SK-N-SH (cell line): ENCODE measurements at regions of chr7 and their contacts with region 1.

Region 1: DNA sequence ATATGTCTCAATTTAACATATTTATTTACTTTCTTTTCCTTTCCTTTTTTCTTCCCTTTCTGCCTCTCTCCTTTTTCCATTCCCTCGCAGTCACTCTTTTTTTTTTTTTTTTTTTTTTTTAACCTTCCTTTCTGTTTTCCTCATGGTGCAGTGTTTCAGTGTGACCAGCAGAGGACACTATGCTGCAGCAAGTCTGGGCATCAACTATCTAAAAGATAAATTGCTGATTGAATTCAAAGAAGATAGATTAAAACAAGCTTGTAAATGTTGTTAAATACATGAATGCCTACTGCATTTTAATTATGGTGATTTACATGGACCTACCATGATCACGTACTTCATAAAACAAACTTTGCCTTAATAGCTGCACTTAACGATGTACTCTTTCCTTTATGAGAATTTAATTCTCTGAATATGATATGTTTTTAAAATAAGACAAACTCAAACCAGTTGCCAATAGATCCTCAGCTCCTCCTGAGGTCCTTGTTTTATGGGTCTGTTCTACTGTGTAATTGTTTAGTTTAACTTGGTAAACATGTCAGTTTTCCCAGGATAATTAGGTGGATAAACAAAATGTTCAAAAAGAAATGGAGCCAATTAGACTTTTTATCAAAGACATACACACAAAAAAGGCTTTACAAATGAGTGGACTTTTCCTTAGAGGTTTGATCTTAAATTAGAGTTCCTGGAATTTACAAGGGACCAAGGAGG is 101.0 kb upstream of the AGR3 start:
- DNase-seq: peak; percentile 30
- H3K4me3 ChIP-seq: no peak overlapping the region; a peak in 1 of 4 replicates
- H3K27ac ChIP-seq: no peak overlapping the region
- H3K4me1 ChIP-seq: no peaks in the 10 kb centered on the region; a peak in 1 of 4 replicates
- H3K27me3 ChIP-seq: peaks cover 43% of the 10 kb centered on the region; the same call in 1 of the 2 replicates
- CTCF ChIP-seq: peak; percentile 100
- EP300 ChIP-seq: no peak
- RAD21 ChIP-seq: peak; percentile 86

Region 2: GRCh38 chr7:16961641-16962040 is 21.2 kb before region 1 on chr7:
- CTCF ChIA-PET with region 1: interaction called, 17 read pairs
- POLR2A ChIA-PET with region 1: no interaction called
- DNase-seq: no peak
- H3K4me3 ChIP-seq: no peak overlapping the region
- H3K27ac ChIP-seq: no peak overlapping the region
- H3K4me1 ChIP-seq: no peaks in the 10 kb centered on the region
- H3K27me3 ChIP-seq: peaks cover 7% of the 10 kb centered on the region; the same call in 1 of the 2 replicates
- CTCF ChIP-seq: no peak
- EP300 ChIP-seq: no peak
- RAD21 ChIP-seq: no peak

Region 3: DNA sequence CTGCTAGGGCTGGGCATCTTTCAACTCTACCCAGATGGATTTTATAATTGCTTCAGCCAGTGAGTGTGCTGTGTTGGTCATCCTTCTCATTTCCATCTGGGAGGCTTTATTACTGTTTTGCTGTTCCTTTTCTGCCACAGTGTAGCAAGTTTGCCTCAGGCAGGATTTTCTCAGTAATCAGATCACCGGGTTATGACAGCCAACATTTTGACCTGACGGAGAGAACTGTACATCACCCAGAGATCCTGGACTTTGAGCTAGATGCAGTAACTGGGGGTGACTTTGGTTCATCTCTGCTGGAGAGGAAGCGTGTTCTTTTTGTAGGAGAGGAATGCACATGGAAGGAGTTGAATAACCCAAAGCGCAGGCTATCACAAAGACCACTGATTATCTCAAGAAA is 10.7 kb after region 1 on chr7:
- CTCF ChIA-PET with region 1: interaction called, 11 read pairs
- POLR2A ChIA-PET with region 1: no interaction called
- DNase-seq: no peak
- H3K4me3 ChIP-seq: no peak overlapping the region
- H3K27ac ChIP-seq: no peak overlapping the region
- H3K4me1 ChIP-seq: peaks cover 5 to 6% of the 10 kb centered on the region in 2 experiments; a peak in 3 of 4 replicates
- H3K27me3 ChIP-seq: peaks cover 25% of the 10 kb centered on the region; the same call in 1 of the 2 replicates
- CTCF ChIP-seq: no peak
- EP300 ChIP-seq: no peak
- RAD21 ChIP-seq: no peak

Region 4: DNA sequence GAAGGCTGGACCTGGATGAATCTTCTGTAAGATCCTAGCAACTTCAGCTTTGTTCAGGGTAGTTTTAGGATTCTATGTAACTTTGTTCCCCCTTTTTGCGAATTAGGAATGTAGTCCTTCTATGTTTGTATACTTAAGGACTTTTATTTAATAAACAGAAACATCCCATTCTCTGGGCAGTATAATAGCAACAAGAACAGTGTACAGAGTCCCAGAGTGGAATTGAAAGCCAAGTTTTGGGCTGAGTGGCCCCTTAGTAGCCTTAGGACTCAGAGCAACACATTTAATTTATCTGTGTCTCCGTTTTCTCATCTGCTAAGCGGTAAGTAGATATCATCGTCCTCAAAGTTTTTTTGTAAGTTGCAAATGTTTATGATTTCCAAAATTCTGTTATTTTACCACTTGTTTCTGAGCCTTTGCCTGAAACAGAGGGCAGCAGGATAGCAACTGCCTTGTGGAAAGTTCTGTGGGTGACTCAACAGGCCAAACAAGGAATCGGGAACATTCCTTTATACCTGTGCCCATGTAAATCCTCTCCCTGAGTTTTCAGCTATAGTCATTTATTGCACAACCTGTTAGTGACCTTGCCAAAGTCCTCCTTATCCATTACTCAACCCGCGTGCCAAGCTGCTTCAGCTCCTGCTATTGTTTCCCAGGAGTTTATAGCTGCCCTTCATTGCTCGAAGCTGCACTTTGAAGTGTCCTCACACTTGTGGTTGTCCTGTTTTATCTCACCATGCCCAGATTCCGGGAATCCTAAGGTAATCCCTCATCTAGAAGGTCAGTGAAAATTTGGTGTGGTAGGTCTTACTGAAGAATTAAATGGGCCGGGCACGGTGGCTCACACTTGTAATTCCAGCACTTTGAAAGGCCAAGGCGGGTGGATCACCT is 116.5 kb after region 1 on chr7:
- CTCF ChIA-PET with region 1: no interaction called
- POLR2A ChIA-PET with region 1: no interaction called
- DNase-seq: no peak
- H3K4me3 ChIP-seq: no peak overlapping the region
- H3K27ac ChIP-seq: no peak overlapping the region
- H3K4me1 ChIP-seq: no peaks in the 10 kb centered on the region
- H3K27me3 ChIP-seq: peaks cover 10% of the 10 kb centered on the region; the same call in 1 of the 2 replicates
- CTCF ChIP-seq: no peak
- EP300 ChIP-seq: no peak
- RAD21 ChIP-seq: no peak

Region 5: DNA sequence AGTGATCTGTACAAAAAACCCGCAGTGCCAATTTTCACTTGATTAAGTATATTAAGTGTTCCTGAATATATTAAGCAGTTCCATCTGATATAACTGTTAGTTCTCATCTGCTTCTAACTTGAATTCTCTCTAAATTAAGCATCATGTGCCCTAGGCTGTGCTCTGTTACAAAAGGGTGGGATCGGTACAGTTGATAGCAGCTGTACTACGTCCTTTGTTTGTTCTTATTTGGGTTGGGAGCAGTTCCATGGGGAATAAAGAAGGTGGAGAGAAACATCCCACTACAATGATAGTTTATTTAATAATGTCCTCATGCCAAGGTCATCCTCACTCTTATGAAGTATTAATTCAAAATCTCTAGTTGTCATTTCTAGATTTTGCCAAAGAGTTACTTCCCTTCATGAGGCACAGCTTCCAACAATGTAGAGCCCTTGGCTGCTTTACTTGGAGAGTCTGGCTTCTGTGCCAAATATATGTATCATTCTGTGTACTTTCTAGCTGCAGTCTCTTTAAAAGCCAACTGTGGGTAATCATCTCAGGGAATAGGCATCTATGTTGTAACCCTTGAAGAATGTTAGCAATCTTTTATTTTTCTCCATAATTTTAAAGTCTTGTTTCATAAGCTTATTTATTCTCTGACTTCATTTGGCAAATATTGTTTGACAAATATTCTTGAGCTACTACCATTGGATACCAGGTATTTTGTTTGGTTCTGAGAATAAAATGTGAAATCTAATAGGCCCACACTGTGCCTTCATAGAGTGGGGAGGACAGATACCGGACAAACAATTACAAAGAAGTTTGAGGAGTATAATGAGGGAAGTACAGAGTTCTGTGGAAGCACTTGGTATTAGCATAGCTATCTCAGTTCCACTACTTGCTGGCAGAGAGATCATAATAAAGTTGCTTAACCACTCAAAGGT is 293.2 kb after region 1 on chr7:
- CTCF ChIA-PET with region 1: no interaction called
- POLR2A ChIA-PET with region 1: no interaction called
- DNase-seq: no peak
- H3K4me3 ChIP-seq: no peak overlapping the region
- H3K27ac ChIP-seq: peak overlapping the region in 1 of 2 experiments; percentile 55; a peak in 2 of 4 replicates
- H3K4me1 ChIP-seq: peaks cover 0 to 17% of the 10 kb centered on the region in 2 experiments; a peak in 1 of 4 replicates
- H3K27me3 ChIP-seq: peaks cover 7% of the 10 kb centered on the region; the same call in 1 of the 2 replicates
- CTCF ChIP-seq: no peak
- EP300 ChIP-seq: peak in 1 of 2 experiments; percentile 51; a peak in 1 of 4 replicates
- RAD21 ChIP-seq: no peak